ENCODE measurements at regions of chr12 and their contacts with region 1.

Region 1: GRCh38 chr12:99223579-99223978 is 424.0 kb upstream of the GARIN6 start:
- DNase-seq: no peak
- ATAC-seq: no peak
- H3K4me3 ChIP-seq: no peak overlapping the region
- H3K4me3 Mint-ChIP-seq: no peak overlapping the region
- H3K27ac ChIP-seq: no peak overlapping the region
- H3K27ac Mint-ChIP-seq: no peak overlapping the region
- H3K4me1 ChIP-seq: no peaks in the 10 kb centered on the region
- H3K4me1 Mint-ChIP-seq: no peaks in the 10 kb centered on the region
- H3K27me3 ChIP-seq: no peaks in the 10 kb centered on the region
- H3K27me3 Mint-ChIP-seq: no peaks in the 10 kb centered on the region
- CTCF ChIP-seq: no peak

Region 2: GRCh38 chr12:98856897-98857540 is 366.6 kb before region 1 on chr12:
- CTCF ChIA-PET with region 1: no interaction called
- POLR2A ChIA-PET with region 1: no interaction called
- intact Hi-C with region 1: no loop called
- DNase-seq: no peak
- ATAC-seq: no peak
- H3K4me3 ChIP-seq: no peak overlapping the region
- H3K4me3 Mint-ChIP-seq: no peak overlapping the region
- H3K27ac ChIP-seq: no peak overlapping the region
- H3K27ac Mint-ChIP-seq: no peak overlapping the region
- H3K4me1 ChIP-seq: no peaks in the 10 kb centered on the region
- H3K4me1 Mint-ChIP-seq: no peaks in the 10 kb centered on the region
- H3K27me3 ChIP-seq: no peaks in the 10 kb centered on the region
- H3K27me3 Mint-ChIP-seq: peaks cover 2% of the 10 kb centered on the region
- CTCF ChIP-seq: no peak

Region 3: GRCh38 chr12:99249543-99249942 is 26.0 kb after region 1 on chr12:
- CTCF ChIA-PET with region 1: no interaction called
- POLR2A ChIA-PET with region 1: no interaction called
- intact Hi-C with region 1: loop called in 1 of 2 experiments (anchors 1 kb)
- DNase-seq: no peak
- ATAC-seq: no peak
- H3K4me3 ChIP-seq: no peak overlapping the region
- H3K4me3 Mint-ChIP-seq: no peak overlapping the region
- H3K27ac ChIP-seq: no peak overlapping the region
- H3K27ac Mint-ChIP-seq: no peak overlapping the region
- H3K4me1 ChIP-seq: no peaks in the 10 kb centered on the region
- H3K4me1 Mint-ChIP-seq: no peaks in the 10 kb centered on the region
- H3K27me3 ChIP-seq: no peaks in the 10 kb centered on the region
- H3K27me3 Mint-ChIP-seq: no peaks in the 10 kb centered on the region
- CTCF ChIP-seq: no peak